Dorsolateral prefrontal cortex (tissue), 120 donors: ENCODE measurements at regions of chr1 and their contacts with region 1.

Region 1: GRCh38 chr1:172449585-172450534 is 6.0 kb upstream of the PIGC start:
- DNase-seq: peak in 2 of 10 donors; percentile 13 to 34
- H3K4me3 ChIP-seq: peak overlapping the region in 11 of 59 donors; percentile 5 to 35 (median 23)
- H3K27ac ChIP-seq: no peak overlapping the region
- H3K27me3 ChIP-seq: peaks cover 0 to 2% (median 0%) of the 10 kb centered on the region in 45 donors
- CTCF ChIP-seq: peak; percentile 30 to 79 (median 66)

Region 2: DNA sequence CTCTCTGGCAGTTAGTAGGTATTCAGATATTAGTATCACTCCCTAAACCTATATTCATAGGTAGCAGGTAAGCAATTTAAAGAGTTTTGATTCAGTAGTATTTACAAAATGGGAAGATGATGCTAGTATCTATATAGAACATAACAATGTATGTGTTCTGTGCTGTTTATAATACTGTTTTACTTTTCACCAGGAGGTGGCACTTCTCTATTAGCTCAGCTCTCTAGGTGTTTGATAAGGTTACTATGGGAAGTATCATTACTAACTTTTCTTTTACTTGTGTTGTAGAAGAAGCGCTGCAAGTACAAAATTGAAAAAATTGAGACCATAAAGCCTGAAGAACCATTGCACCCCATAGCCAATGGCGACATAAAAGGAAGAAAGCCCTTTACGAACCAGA is 159.7 kb after region 1 on chr1:
- intact Hi-C with region 1: no loop called
- DNase-seq: no peak
- H3K4me3 ChIP-seq: no peak overlapping the region
- H3K27ac ChIP-seq: no peak overlapping the region
- H3K27me3 ChIP-seq: no peaks in the 10 kb centered on the region
- CTCF ChIP-seq: peak in 17 of 56 donors; percentile 8 to 38 (median 26)

Region 3: DNA sequence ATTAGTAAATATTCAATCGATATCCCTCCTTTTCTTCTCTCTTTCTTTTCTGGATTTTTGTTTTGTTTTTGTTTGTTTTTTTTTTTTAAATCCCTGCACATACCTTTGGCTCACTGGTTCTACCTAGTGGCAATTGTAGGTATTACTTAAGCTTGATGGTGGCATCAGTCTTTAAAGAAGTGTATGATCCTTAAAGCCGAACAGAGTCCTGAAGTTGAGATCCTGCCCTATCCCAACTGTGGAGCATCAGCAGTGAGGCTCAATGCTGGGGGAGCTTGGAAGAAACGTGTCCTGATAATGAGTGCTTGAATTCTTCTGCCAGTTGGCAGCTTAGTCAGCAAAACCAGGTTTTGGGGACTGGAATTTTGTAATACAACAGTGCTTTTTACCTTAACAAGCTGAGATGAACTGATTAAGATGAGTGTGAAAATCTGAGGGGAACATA is 269.9 kb after region 1 on chr1:
- intact Hi-C with region 1: loop called in 1 of 2 experiments (anchors 2 kb)
- DNase-seq: no peak
- H3K4me3 ChIP-seq: no peak overlapping the region
- H3K27ac ChIP-seq: no peak overlapping the region
- H3K27me3 ChIP-seq: no peaks in the 10 kb centered on the region
- CTCF ChIP-seq: peak; percentile 38 to 75 (median 62)